ENCODE measurements at regions of chr20 and their contacts with region 1.

Region 1: GRCh38 chr20:35883778-35884540 is 70.3 kb downstream of the SCAND1 start:
- DNase-seq: peak; percentile 100
- ATAC-seq: peak; percentile 93
- H3K4me3 ChIP-seq: peak overlapping the region; percentile 4; the same call in 1 of the 2 replicates
- H3K27ac ChIP-seq: peak overlapping the region; percentile 81
- H3K4me1 ChIP-seq: peaks cover 15% of the 10 kb centered on the region
- H3K27me3 ChIP-seq: no peaks in the 10 kb centered on the region
- CTCF ChIP-seq: peak; percentile 87
- POLR2A ChIP-seq: peak; percentile 76
- RAD21 ChIP-seq: peak; percentile 91

Region 2: DNA sequence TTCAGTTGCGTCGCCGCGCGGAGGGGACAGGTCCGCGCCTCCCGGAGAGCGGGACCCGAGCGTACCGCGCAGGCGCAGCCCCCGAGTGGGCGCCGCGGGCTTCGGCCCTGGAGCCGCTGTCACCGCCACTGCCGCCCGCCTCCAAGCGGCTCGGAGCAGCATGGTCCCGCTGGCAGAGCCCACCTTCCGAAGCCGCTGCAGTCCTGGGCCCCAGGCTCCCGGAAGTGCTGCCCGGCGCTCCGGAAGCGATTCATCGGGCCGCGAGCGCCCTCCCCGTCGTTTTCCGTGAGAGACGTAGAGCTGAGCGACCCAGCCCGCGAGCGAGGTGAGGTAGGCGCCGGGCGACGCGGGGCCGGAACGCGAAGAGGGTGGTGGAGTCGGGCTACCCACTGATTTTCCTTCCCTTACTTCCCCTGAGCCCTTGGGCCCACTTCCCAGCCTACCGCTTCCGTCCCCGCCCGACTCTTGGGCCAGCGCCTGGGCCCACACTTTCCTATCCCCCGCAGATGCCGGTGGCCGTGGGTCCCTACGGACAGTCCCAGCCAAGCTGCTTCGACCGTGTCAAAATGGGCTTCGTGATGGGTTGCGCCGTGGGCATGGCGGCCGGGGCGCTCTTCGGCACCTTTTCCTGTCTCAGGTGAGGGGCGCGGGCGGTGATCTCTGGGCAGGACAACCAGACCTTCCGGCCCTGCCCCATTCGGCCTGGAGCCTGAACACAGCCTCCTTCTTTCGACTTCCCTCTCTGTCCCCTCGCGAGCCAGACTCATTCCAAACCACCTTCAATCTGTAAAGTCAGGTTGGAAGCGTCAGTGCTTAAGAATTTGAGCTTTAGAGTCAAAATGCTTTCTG is 184.6 kb before region 1 on chr20 and contains the starts of genes NFS1 and ROMO1:
- CTCF ChIA-PET with region 1: no interaction called
- POLR2A ChIA-PET with region 1: no interaction called
- dilution Hi-C with region 1: no loop called
- in situ Hi-C with region 1: no loop called
- intact Hi-C with region 1: loop called (anchors 10 kb)
- DNase-seq: peak; percentile 76
- ATAC-seq: peak; percentile 84
- H3K4me3 ChIP-seq: peak within 1 kb of the TSS; percentile 73
- H3K27ac ChIP-seq: peak within 1 kb of the TSS; percentile 77
- H3K4me1 ChIP-seq: peaks cover 5% of the 10 kb centered on the region
- H3K27me3 ChIP-seq: no peaks in the 10 kb centered on the region
- CTCF ChIP-seq: peak; percentile 34; the same call in 1 of the 2 replicates
- POLR2A ChIP-seq: peak; percentile 78
- RAD21 ChIP-seq: 0 out of 2 replicates have a peak, but pooled peaks have one; percentile 20
- total RNA-seq, gene NFS1: 11.4 and 16.5 TPM in 2 replicates
- total RNA-seq, gene ROMO1: 223 and 397 TPM in 2 replicates

Region 3: GRCh38 chr20:35771689-35772562 is 112.0 kb before region 1 on chr20 and contains the start of gene PHF20:
- CTCF ChIA-PET with region 1: no interaction called
- POLR2A ChIA-PET with region 1: no interaction called
- dilution Hi-C with region 1: no loop called
- in situ Hi-C with region 1: no loop called
- intact Hi-C with region 1: loop called (anchors 1 kb)
- DNase-seq: peak; percentile 96
- ATAC-seq: peak; percentile 93
- H3K4me3 ChIP-seq: peak within 1 kb of the TSS; percentile 94
- H3K27ac ChIP-seq: peak within 1 kb of the TSS; percentile 79
- H3K4me1 ChIP-seq: peaks cover 21% of the 10 kb centered on the region
- H3K27me3 ChIP-seq: no peaks in the 10 kb centered on the region
- CTCF ChIP-seq: no peak
- POLR2A ChIP-seq: peak; percentile 84
- RAD21 ChIP-seq: no peak
- total RNA-seq, gene PHF20: 22.0 and 30.3 TPM in 2 replicates

Region 4: DNA sequence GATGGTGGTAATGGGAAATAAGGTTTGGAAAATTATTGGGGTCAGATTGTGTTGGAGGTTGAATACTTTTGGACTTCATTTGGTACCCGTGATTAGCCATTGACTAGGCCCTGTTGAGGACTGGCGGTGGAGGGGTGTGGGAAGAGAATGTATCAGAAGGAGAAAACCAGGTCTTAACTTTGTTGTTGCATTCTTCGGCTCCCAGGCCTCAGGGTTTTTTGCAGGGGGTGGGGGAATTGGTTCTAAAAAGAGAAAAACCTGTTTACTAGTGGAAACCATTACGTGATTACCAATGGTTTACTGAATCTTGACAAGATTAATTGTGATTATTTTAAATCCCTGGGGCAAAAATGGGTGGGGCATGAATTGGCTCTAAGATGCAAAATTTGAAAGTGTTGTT is 27.1 kb before region 1 on chr20:
- CTCF ChIA-PET with region 1: no interaction called
- POLR2A ChIA-PET with region 1: no interaction called
- dilution Hi-C with region 1: no loop called
- in situ Hi-C with region 1: no loop called
- intact Hi-C with region 1: no loop called
- DNase-seq: no peak
- ATAC-seq: no peak
- H3K4me3 ChIP-seq: no peak overlapping the region
- H3K27ac ChIP-seq: no peak overlapping the region
- H3K4me1 ChIP-seq: peaks cover 5% of the 10 kb centered on the region
- H3K27me3 ChIP-seq: no peaks in the 10 kb centered on the region
- CTCF ChIP-seq: no peak
- POLR2A ChIP-seq: no peak
- RAD21 ChIP-seq: no peak

Measured in IMR-90 (cell line).